AG04450 (cell line): ENCODE measurements at regions of chr3 and their contacts with region 1.

Region 1: GRCh38 chr3:158790901-158791589 is 10.8 kb upstream of the MFSD1 start:
- DNase-seq: no peak
- H3K4me3 ChIP-seq: no peak overlapping the region
- H3K27ac ChIP-seq: no peak overlapping the region
- H3K27me3 ChIP-seq: no peaks in the 10 kb centered on the region
- CTCF ChIP-seq: peak; percentile 84

Region 2: DNA sequence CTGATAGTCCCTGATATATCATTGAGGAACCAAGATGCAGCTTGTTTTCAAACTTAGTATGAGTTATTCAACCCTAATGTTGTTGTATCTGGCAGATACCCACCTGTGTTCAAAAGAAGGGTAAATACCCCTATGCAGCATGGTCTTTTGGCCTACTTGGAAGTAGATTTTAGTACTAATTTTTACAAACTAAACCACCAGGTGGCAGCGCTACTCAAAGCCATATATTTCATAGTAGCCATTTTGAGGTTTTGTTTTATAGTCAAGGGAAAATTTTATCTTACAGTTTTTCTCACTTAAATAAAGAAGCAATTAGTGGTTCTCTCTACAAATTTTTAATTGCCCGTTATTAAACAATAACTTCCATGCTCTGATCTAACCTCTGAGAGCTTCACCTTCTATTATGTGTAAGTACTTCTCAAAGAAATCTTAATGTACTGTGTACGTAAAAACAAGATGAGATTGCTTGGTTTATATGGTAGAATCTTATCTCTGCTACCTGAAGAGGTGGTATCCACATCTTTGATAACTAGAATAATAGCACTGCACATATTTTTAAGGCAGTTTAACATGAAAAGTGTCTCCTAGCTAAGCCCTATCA is 251.5 kb before region 1 on chr3:
- CTCF ChIA-PET with region 1: interaction called, 53 read pairs
- POLR2A ChIA-PET with region 1: no interaction called
- DNase-seq: peak; percentile 16
- H3K4me3 ChIP-seq: no peak overlapping the region
- H3K27ac ChIP-seq: no peak overlapping the region
- H3K27me3 ChIP-seq: no peaks in the 10 kb centered on the region
- CTCF ChIP-seq: peak; percentile 60

Region 3: GRCh38 chr3:158649791-158650190 is 141.3 kb before region 1 on chr3:
- CTCF ChIA-PET with region 1: interaction called, 31 read pairs
- POLR2A ChIA-PET with region 1: interaction called, 3 read pairs
- DNase-seq: no peak
- H3K4me3 ChIP-seq: no peak overlapping the region
- H3K27ac ChIP-seq: no peak overlapping the region
- H3K27me3 ChIP-seq: no peaks in the 10 kb centered on the region
- CTCF ChIP-seq: no peak

Region 4: DNA sequence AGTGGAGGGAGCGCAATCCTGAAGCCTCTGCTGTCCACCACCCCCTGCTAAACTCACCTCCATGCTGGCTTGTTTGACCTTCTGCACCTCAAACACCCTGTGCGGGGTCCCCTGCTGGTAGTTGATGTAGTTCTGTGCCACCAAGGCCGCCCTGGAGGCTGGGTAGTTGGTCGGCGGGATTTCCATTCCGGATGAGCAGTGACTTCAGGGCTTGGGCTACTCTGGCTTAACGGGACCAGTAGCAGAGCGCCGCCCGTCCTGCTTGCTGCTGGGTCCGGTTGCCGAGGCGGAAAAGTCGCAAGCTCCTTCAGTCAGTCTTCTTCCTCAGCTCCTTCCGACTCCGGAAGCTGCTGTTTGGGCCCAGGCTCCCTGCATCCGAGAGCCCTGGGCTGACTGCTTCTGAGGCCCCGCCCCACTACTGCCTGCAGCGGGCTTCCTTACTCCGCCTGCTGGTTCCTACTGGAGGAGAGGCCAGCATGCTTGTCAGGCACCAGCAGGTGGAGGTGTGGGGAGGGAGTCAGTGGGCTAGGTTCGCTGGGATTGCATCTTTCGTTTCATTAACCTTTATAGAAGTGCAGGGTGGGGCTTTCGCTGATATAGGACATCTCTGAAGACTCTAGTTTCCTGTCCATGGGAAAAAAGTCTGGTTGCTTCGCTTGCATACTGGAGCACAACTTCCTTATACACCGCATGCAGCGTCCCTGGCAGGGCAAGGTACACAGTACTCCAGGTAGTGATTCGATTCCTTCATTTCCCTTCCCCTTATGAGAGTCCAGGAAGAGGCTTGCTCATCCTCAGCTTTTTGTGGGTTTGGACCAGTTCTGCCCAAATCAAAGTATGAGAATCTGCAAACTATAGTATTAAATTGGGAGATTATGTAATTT is 118.5 kb before region 1 on chr3 and contains the start of gene LXN:
- CTCF ChIA-PET with region 1: interaction called, 44 read pairs
- POLR2A ChIA-PET with region 1: no interaction called
- DNase-seq: peak; percentile 60
- H3K4me3 ChIP-seq: peak within 1 kb of the TSS; percentile 90
- H3K27ac ChIP-seq: peak within 1 kb of the TSS; percentile 55
- H3K27me3 ChIP-seq: no peaks in the 10 kb centered on the region
- CTCF ChIP-seq: peak; percentile 90
- polyA plus RNA-seq, gene LXN: 281 and 347 TPM in 2 replicates

Region 5: GRCh38 chr3:158713094-158713499 is 77.9 kb before region 1 on chr3:
- CTCF ChIA-PET with region 1: interaction called, 10 read pairs
- POLR2A ChIA-PET with region 1: no interaction called
- DNase-seq: no peak
- H3K4me3 ChIP-seq: no peak overlapping the region
- H3K27ac ChIP-seq: no peak overlapping the region
- H3K27me3 ChIP-seq: no peaks in the 10 kb centered on the region
- CTCF ChIP-seq: no peak

Region 6: GRCh38 chr3:158777161-158777873 is 13.7 kb before region 1 on chr3:
- CTCF ChIA-PET with region 1: interaction called, 20 read pairs
- POLR2A ChIA-PET with region 1: no interaction called
- DNase-seq: no peak
- H3K4me3 ChIP-seq: no peak overlapping the region
- H3K27ac ChIP-seq: no peak overlapping the region
- H3K27me3 ChIP-seq: no peaks in the 10 kb centered on the region
- CTCF ChIP-seq: no peak

Region 7: DNA sequence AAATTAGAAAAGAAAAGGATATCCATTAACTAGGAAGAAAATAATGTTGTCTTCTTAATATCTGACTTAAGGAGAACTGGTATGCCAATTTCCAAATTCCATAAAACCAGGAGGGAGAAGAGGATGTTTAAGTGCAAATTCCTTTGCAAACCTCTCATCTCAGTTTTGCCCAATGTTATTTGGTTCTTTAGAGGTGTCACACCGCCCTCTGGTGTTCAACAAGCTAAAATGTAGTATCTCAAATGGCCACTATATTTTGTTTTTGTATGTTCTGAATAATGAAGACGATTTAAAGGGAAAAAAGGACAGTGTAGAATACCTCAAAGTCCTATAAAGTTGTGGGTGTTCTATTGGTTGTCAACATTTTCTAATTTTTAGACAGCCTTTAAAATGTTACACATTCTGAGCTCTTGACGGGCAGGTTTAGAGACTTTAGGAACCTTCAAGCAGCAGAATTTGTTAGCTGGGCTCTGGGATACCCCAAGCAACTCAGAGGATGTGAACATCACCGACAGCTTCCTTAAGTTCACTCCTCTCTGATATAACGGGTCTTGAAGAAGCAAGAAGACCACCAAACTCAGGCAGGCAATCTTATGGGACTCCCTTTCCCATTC is 469.1 kb after region 1 on chr3:
- CTCF ChIA-PET with region 1: interaction called, 16 read pairs
- POLR2A ChIA-PET with region 1: no interaction called
- DNase-seq: peak; percentile 68
- H3K4me3 ChIP-seq: no peak overlapping the region
- H3K27ac ChIP-seq: no peak overlapping the region
- H3K27me3 ChIP-seq: peaks cover 2% of the 10 kb centered on the region
- CTCF ChIP-seq: peak; percentile 75